Activated CD4-positive, alpha-beta T cell treated with anti-CD3 and anti-CD28 coated beads for 36 hours (primary cell): ENCODE measurements at regions of chr16 and their contacts with region 1.

Region 1: DNA sequence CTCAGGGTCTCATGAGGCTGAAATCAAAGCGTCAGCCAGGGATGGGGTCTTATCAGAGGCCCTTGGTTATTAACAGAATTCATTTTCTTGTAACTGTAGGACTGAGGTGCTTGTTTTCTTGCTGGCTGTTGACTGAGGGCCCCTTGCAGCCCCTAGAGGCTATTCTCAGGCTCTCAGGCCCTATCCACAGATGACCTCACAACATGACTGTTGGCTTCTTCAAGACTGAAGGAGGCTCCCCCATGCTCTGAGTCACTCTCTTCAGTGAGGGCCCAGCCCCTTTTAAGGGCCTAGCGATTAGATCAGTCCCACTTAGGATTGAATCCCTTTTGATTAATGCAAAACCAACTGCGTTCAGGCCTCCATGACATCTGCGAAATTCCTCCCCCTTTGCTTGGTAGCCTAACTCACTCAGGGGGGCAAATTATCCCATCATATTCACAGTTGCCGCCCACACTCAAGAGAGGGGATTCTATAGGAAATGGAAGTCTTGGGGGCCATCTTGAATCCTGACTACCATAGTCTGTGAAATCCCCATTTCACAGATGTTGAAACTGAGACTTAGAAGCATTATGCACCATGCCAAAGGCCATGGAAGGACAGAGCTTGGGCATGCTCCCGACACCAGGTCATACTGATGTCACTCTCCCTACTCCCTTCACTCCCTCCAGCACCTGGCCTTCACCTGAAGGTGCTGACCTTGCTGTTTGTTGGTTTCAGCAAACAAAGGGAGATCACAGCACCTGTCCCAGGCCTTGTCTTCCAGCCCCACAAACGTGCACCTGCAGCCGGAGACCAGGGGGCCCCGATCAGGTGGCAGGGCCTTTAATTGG is 592.3 kb downstream of the MAF start:
- DNase-seq: peak; percentile 49
- ATAC-seq: peak; percentile 76
- H3K4me3 Mint-ChIP-seq: no peak overlapping the region
- H3K27ac Mint-ChIP-seq: peak overlapping the region; percentile 79
- H3K4me1 Mint-ChIP-seq: peaks cover 35% of the 10 kb centered on the region
- H3K27me3 Mint-ChIP-seq: no peaks in the 10 kb centered on the region

Region 2: DNA sequence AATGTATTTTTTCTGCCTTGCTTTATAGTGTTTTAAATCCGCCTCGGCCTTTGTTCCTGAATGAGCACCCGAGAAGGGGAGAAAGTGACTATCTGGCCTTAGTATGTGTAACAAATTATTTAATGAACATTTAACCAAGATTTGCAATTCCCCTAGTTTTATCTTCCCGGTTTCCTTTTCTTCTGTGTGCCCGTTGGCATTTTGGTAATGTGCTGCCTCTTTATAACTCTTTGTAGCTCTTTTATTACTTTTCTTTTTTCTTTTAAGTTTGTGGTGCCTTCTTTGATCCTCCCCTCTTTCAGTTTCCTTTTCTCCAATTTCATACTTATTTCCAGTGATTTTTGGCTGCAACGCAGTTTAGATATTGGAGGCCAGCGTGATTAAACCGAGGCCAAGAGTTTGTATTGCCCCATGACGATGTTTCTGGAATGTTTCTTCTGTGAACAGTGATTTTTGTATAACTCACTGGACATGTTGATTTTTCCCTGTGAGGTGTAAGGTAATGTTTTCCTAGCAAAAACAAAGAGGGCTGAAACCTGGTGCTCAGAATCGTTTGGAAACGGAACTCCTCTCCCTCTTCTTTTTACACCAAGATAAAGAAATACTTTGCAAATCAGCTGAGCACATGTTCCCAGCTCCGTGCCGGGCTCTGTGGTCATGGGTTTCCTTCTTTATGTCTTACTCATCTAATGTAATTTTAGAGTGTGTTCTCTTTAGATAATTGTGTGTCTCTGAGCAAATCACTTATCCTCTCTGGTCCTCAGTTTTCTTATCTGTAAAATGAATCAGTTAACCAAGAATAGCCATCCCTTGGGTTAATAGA is 564.5 kb before region 1 on chr16:
- CTCF ChIA-PET with region 1: no interaction called
- POLR2A ChIA-PET with region 1: no interaction called
- intact Hi-C with region 1: no loop called
- DNase-seq: no peak
- ATAC-seq: no peak
- H3K4me3 Mint-ChIP-seq: no peak overlapping the region
- H3K27ac Mint-ChIP-seq: no peak overlapping the region
- H3K4me1 Mint-ChIP-seq: peaks cover 5% of the 10 kb centered on the region
- H3K27me3 Mint-ChIP-seq: no peaks in the 10 kb centered on the region

Region 3: DNA sequence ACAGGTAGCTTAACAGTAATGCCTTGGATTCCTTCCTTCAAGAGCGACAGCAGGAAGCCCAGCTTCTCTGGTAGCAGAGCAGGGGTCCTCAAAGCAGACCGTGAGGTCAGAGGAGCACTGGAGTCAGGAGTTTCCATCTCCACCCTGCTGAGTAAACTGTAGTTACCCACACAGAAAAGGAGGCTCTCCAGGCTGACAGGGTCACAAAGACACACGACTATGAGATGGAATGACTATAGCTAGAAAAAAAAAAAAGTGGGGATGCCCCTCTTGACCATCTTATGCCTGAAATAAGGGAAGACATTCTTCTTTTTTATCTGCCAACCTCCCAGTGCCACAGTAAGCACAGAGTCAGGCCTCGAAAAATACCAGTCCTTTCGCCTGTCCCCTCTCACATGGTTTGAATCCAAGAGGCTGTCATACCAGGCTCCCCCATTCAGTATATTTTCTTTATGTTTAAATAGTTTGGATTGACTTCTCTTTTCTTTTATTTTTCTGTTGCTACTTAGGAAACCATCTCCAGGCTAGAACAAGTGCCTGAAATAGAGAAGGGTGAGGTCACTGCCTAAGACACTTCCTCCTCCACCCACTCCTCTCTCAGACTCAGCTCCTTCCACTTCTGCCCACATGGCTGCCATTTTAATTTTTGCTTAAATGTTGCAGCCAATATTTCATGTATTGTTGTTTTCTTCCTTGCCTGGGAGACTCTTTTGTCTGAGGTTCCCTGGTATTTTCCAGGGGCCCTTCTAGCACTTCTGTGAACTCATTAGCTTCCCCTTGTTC is 115.1 kb before region 1 on chr16:
- CTCF ChIA-PET with region 1: no interaction called
- POLR2A ChIA-PET with region 1: no interaction called
- intact Hi-C with region 1: loop called in 1 of 2 experiments (anchors 5 kb)
- DNase-seq: peak; percentile 39
- ATAC-seq: peak; percentile 65
- H3K4me3 Mint-ChIP-seq: no peak overlapping the region
- H3K27ac Mint-ChIP-seq: peak overlapping the region; percentile 80
- H3K4me1 Mint-ChIP-seq: peaks cover 61% of the 10 kb centered on the region
- H3K27me3 Mint-ChIP-seq: no peaks in the 10 kb centered on the region

Region 4: DNA sequence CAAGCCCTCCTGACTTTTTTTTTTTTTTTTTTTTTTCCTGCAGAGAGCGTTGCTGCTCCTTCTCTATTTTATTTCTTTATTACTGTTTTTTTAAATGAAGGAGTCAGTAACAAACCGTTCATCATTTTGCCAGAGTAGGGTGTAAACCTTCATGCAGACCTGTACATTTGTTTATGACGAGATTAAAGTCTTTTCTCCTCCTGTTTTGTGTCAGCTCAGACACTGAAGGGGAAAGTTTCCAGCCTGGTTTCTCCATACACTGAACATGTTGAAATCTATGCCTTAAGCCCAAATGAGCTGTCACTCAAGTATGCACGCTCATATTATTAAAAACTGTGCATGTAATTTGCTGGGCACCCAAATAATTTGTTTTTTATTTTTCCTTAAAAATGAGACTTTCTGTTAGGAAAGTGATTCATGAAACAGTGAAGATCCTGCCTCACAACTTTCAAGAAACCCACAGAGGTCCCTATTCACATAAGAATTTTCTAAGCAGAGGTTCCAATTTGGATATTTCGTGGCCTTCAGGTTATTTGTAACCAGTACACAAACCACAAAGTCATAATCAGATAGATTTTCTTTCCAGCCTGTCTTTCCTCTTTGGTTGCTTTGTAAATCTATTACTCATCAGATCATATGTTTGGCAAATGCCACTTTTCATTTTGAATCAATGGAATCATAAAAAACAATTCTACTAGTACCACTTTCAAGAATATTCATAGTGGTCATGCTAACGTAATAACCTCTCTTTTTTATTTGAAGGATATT is 108.0 kb before region 1 on chr16:
- CTCF ChIA-PET with region 1: no interaction called
- POLR2A ChIA-PET with region 1: no interaction called
- intact Hi-C with region 1: loop called (anchors 5 kb)
- DNase-seq: no peak
- ATAC-seq: peak; percentile 55
- H3K4me3 Mint-ChIP-seq: no peak overlapping the region
- H3K27ac Mint-ChIP-seq: peak overlapping the region; percentile 80
- H3K4me1 Mint-ChIP-seq: peaks cover 52% of the 10 kb centered on the region
- H3K27me3 Mint-ChIP-seq: no peaks in the 10 kb centered on the region